SK-N-SH (cell line): ENCODE measurements at regions of chr11 and their contacts with region 1.

Region 1: GRCh38 chr11:93921695-93922468 is 71.5 kb upstream of the VSTM5 start:
- DNase-seq: peak; percentile 58
- H3K4me3 ChIP-seq: peak overlapping the region in 1 of 2 experiments; percentile 33; a peak in 1 of 4 replicates
- H3K27ac ChIP-seq: no peak overlapping the region
- H3K4me1 ChIP-seq: no peaks in the 10 kb centered on the region
- H3K27me3 ChIP-seq: no peaks in the 10 kb centered on the region
- CTCF ChIP-seq: peak; percentile 68
- EP300 ChIP-seq: no peak
- RAD21 ChIP-seq: peak; percentile 82

Region 2: DNA sequence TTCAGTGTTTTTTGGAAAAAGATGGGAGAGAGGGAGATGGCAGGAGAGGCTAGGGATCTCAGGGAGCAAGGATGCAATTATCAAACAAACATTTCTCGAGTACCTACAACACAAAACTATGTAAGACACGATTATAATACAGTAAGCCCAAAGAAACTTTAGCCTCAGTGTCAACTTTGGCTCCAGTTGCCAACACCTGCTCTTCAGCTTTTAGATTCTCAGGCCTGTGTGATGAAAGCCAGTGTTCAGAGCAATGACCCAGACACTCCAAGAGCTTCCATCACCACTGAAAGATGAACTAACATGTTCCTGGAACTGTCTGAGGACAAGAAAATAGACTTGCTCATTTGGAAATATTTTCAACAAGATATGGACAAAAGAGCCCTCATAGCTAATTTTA is 291.8 kb before region 1 on chr11:
- CTCF ChIA-PET with region 1: no interaction called
- POLR2A ChIA-PET with region 1: no interaction called
- DNase-seq: no peak
- H3K4me3 ChIP-seq: no peak overlapping the region
- H3K27ac ChIP-seq: no peak overlapping the region
- H3K4me1 ChIP-seq: peaks cover 0 to 3% of the 10 kb centered on the region in 2 experiments; a peak in 1 of 4 replicates
- H3K27me3 ChIP-seq: no peaks in the 10 kb centered on the region; the same call in 1 of the 2 replicates
- CTCF ChIP-seq: no peak
- EP300 ChIP-seq: no peak
- RAD21 ChIP-seq: no peak

Region 3: DNA sequence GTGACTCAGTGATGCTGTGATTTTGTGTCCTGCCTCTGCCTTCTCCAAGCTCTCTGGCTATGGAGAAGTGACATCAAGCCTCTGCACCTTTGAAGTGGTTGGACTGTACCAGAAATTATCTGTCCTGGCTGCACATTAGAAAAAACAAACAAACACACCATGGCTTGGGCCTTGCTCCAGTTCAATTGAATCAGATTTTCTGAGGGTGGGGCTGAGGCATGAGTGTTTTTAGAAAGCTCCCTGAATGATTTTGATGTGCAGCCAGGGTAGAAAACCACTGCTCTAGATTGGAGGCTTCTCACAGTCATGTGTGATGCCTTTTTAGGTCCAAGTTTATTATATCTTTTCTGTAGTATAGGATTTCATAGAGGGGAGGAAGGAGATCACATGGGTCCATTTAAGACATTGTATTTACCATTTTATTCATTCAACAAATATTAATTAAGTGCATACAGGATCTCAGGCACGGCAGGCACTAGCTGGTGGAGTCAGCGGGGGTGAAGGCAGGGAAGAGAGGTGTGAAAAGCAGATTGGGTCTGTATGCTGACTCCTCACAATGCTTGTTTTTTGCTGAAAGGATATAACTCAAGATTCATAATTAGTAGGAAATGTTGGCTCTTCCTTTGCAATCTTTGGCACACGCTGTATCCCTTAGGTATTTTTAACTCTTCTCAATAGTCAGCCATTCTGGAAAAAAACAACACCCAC is 64.3 kb before region 1 on chr11:
- CTCF ChIA-PET with region 1: no interaction called
- POLR2A ChIA-PET with region 1: no interaction called
- DNase-seq: no peak
- H3K4me3 ChIP-seq: no peak overlapping the region
- H3K27ac ChIP-seq: no peak overlapping the region
- H3K4me1 ChIP-seq: peaks cover 0 to 4% of the 10 kb centered on the region in 2 experiments; a peak in 1 of 4 replicates
- H3K27me3 ChIP-seq: no peaks in the 10 kb centered on the region
- CTCF ChIP-seq: no peak
- EP300 ChIP-seq: no peak
- RAD21 ChIP-seq: no peak

Region 4: GRCh38 chr11:93895106-93895862 is 26.6 kb before region 1 on chr11:
- CTCF ChIA-PET with region 1: interaction called, 36 read pairs
- POLR2A ChIA-PET with region 1: no interaction called
- DNase-seq: peak; percentile 40
- H3K4me3 ChIP-seq: peak overlapping the region in 1 of 2 experiments; percentile 34; a peak in 1 of 4 replicates
- H3K27ac ChIP-seq: no peak overlapping the region
- H3K4me1 ChIP-seq: no peaks in the 10 kb centered on the region
- H3K27me3 ChIP-seq: no peaks in the 10 kb centered on the region; the same call in 1 of the 2 replicates
- CTCF ChIP-seq: peak; percentile 82
- EP300 ChIP-seq: no peak
- RAD21 ChIP-seq: peak; percentile 84

Region 5: GRCh38 chr11:93908689-93909088 is 13.2 kb before region 1 on chr11:
- CTCF ChIA-PET with region 1: interaction called, 12 read pairs
- POLR2A ChIA-PET with region 1: no interaction called
- DNase-seq: no peak
- H3K4me3 ChIP-seq: no peak overlapping the region
- H3K27ac ChIP-seq: peak overlapping the region in 1 of 2 experiments; percentile 15; a peak in 2 of 4 replicates
- H3K4me1 ChIP-seq: peaks cover 0 to 11% of the 10 kb centered on the region in 2 experiments; a peak in 3 of 4 replicates
- H3K27me3 ChIP-seq: no peaks in the 10 kb centered on the region
- CTCF ChIP-seq: no peak
- EP300 ChIP-seq: 0 out of 4 replicates have a peak, but pooled peaks of 1 of the 2 experiments have one; percentile 45
- RAD21 ChIP-seq: no peak

Region 6: DNA sequence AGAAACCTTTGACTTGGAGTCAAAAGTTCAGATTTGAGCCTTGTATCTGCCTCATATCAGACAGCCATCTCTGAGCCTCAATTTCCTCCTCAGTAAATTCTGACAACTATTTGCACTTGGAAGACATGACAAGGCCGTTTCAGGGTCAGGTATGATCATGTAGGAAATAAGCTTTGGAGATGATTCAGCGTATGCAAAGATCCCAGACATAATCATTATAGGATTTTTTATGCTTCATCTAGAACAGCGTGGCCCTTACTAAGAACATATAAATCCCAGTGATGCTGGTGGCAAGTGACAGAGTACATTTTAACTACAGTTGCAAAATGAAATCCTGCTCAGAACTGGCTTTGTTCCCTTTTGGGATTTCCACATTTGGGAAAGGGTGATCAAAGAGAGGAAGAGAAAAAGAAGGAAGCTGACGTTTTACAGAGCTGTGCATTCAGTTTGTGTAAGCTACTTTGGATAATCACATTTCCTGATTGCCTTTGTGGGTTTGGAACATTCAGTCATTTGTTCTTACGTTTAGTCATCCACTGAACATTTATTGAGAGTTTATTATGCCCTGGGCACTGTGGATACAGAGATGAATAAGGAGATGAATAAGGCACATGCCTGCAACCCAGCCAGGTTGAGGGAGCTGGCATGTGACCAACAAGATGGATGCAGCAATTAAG is 17.3 kb after region 1 on chr11:
- CTCF ChIA-PET with region 1: interaction called, 14 read pairs
- POLR2A ChIA-PET with region 1: no interaction called
- DNase-seq: no peak
- H3K4me3 ChIP-seq: no peak overlapping the region
- H3K27ac ChIP-seq: no peak overlapping the region
- H3K4me1 ChIP-seq: peaks cover 0 to 10% of the 10 kb centered on the region in 2 experiments; a peak in 1 of 4 replicates
- H3K27me3 ChIP-seq: no peaks in the 10 kb centered on the region
- CTCF ChIP-seq: no peak
- EP300 ChIP-seq: no peak
- RAD21 ChIP-seq: no peak

Region 7: GRCh38 chr11:93974759-93975158 is 52.9 kb after region 1 on chr11:
- CTCF ChIA-PET with region 1: no interaction called
- POLR2A ChIA-PET with region 1: no interaction called
- DNase-seq: no peak
- H3K4me3 ChIP-seq: no peak overlapping the region
- H3K27ac ChIP-seq: no peak overlapping the region
- H3K4me1 ChIP-seq: no peaks in the 10 kb centered on the region
- H3K27me3 ChIP-seq: no peaks in the 10 kb centered on the region
- CTCF ChIP-seq: no peak
- EP300 ChIP-seq: no peak
- RAD21 ChIP-seq: no peak

Region 8: GRCh38 chr11:94128746-94129511 is 207.0 kb after region 1 on chr11 and contains the start of gene PANX1:
- CTCF ChIA-PET with region 1: interaction called, 12 read pairs
- POLR2A ChIA-PET with region 1: no interaction called
- DNase-seq: peak; percentile 90
- H3K4me3 ChIP-seq: peak within 1 kb of the TSS; percentile 69 to 74
- H3K27ac ChIP-seq: peak within 1 kb of the TSS; percentile 89 to 95
- H3K4me1 ChIP-seq: peaks cover 42 to 45% of the 10 kb centered on the region in 2 experiments
- H3K27me3 ChIP-seq: no peaks in the 10 kb centered on the region
- CTCF ChIP-seq: no peak
- EP300 ChIP-seq: 0 out of 4 replicates have a peak, but pooled peaks of 1 of the 2 experiments have one; percentile 25
- RAD21 ChIP-seq: no peak
- polyA plus RNA-seq, gene PANX1: 11.1 and 16.9 TPM in 2 replicates

Region 9: GRCh38 chr11:94417386-94417987 is 495.6 kb after region 1 on chr11:
- CTCF ChIA-PET with region 1: interaction called, 12 read pairs
- POLR2A ChIA-PET with region 1: no interaction called
- DNase-seq: peak; percentile 26
- H3K4me3 ChIP-seq: no peak overlapping the region; a peak in 1 of 4 replicates
- H3K27ac ChIP-seq: no peak overlapping the region
- H3K4me1 ChIP-seq: no peaks in the 10 kb centered on the region
- H3K27me3 ChIP-seq: no peaks in the 10 kb centered on the region
- CTCF ChIP-seq: peak; percentile 73
- EP300 ChIP-seq: no peak
- RAD21 ChIP-seq: peak; percentile 72

Region 10: GRCh38 chr11:94504689-94505293 is 582.9 kb after region 1 on chr11:
- CTCF ChIA-PET with region 1: interaction called, 10 read pairs
- POLR2A ChIA-PET with region 1: no interaction called
- DNase-seq: peak; percentile 52
- H3K4me3 ChIP-seq: no peak overlapping the region
- H3K27ac ChIP-seq: no peak overlapping the region
- H3K4me1 ChIP-seq: no peaks in the 10 kb centered on the region
- H3K27me3 ChIP-seq: no peaks in the 10 kb centered on the region
- CTCF ChIP-seq: peak; percentile 85
- EP300 ChIP-seq: no peak
- RAD21 ChIP-seq: peak; percentile 78